CD8-positive, alpha-beta T cell (primary cell): ENCODE measurements at regions of chr1 and their contacts with region 1.

Region 1: DNA sequence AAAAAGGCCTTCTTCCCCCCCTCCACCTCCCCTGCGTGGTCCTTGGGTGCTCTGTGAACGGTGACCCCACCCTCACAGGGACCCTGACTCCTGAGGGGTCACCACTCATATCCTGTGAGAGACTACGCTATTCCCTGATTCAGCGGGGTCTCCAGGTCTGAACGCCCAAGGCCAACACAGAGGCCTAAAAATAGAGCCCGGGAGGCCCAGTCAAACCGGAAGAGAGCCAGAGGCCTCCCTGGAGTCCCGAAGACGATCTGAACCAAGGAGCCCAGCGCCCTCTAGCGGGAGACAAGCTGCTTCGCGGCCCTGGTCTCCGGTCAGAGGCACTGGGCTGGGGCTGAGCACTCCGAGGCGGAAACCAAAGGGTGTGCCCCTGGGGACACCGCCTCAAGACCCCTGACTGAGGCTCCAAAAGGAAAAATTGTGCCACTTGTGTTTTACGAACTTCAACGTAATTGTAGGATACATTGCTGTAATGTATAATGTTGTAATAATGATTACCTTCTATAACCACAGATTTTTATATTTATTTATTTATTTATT is 42.4 kb upstream of the PSEN2 start:
- DNase-seq: peak; percentile 86 to 98 (median 93)
- ATAC-seq: peak; percentile 99
- H3K4me3 ChIP-seq: peak overlapping the region; percentile 3 to 21
- H3K4me3 Mint-ChIP-seq: peak overlapping the region; percentile 58
- H3K27ac ChIP-seq: peak overlapping the region; percentile 46 to 73
- H3K27ac Mint-ChIP-seq: peak overlapping the region; percentile 69
- H3K4me1 ChIP-seq: peaks cover 10% of the 10 kb centered on the region
- H3K4me1 Mint-ChIP-seq: peaks cover 20% of the 10 kb centered on the region
- H3K27me3 ChIP-seq: no peaks in the 10 kb centered on the region
- H3K27me3 Mint-ChIP-seq: no peaks in the 10 kb centered on the region
- CTCF ChIP-seq: peak; percentile 94

Region 2: GRCh38 chr1:226547754-226548191 is 280.3 kb before region 1 on chr1:
- CTCF ChIA-PET with region 1: interaction called, 4 read pairs
- POLR2A ChIA-PET with region 1: no interaction called
- intact Hi-C with region 1: loop called in 1 of 2 experiments (anchors 5 kb)
- DNase-seq: peak; percentile 34 to 78 (median 56)
- ATAC-seq: peak; percentile 43
- H3K4me3 ChIP-seq: no peak overlapping the region
- H3K4me3 Mint-ChIP-seq: peak overlapping the region; percentile 58
- H3K27ac ChIP-seq: no peak overlapping the region
- H3K27ac Mint-ChIP-seq: no peak overlapping the region
- H3K4me1 ChIP-seq: peaks cover 20% of the 10 kb centered on the region
- H3K4me1 Mint-ChIP-seq: peaks cover 23% of the 10 kb centered on the region
- H3K27me3 ChIP-seq: peaks cover 6 to 18% of the 10 kb centered on the region in 2 experiments
- H3K27me3 Mint-ChIP-seq: peaks cover 25% of the 10 kb centered on the region
- CTCF ChIP-seq: peak; percentile 62

Region 3: DNA sequence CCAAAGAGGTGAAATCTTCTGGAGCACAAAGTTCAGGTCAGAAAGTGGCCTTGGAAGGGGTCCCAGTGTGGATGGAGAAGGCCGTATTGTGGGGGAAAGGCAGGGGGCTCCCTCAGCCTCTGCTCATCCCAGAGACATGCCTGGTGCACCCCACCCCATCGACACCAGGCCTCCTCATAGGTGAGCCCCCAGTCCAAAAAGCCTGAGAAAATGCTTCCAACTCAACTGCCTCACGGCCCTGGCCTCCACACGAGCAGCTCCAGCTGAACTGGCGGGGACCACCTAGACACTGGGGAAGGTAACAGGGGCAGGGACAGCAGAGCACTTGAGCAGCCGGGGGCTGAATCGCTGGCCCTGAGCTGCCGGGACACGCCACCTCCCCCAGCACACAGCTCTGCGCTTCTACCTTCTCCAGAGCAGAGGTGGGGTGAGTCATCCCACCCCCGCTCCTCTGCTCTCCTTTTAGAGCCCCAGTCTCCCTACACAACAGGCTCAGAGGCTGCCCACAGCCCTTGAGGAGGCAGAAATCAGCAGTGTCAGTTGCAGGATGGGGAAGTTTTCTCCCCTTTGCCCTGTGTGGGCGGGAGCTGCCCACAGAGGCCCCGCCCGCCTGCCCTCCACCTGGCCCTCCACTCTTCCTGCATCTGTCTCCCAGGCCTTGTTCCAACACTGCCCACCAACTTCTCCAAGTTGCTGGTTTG is 185.0 kb before region 1 on chr1:
- CTCF ChIA-PET with region 1: interaction called, 19 read pairs
- POLR2A ChIA-PET with region 1: interaction called, 3 read pairs
- intact Hi-C with region 1: no loop called
- DNase-seq: peak in 6 of 9 experiments; percentile 49 to 73 (median 66)
- ATAC-seq: peak; percentile 76
- H3K4me3 ChIP-seq: no peak overlapping the region
- H3K4me3 Mint-ChIP-seq: peak overlapping the region; percentile 54
- H3K27ac ChIP-seq: peak overlapping the region; percentile 27 to 34
- H3K27ac Mint-ChIP-seq: peak overlapping the region; percentile 89
- H3K4me1 ChIP-seq: peaks cover 57% of the 10 kb centered on the region
- H3K4me1 Mint-ChIP-seq: peaks cover 55% of the 10 kb centered on the region
- H3K27me3 ChIP-seq: no peaks in the 10 kb centered on the region
- H3K27me3 Mint-ChIP-seq: no peaks in the 10 kb centered on the region
- CTCF ChIP-seq: no peak

Region 4: GRCh38 chr1:226649780-226650179 is 178.3 kb before region 1 on chr1:
- CTCF ChIA-PET with region 1: interaction called, 9 read pairs
- POLR2A ChIA-PET with region 1: no interaction called
- intact Hi-C with region 1: loop called in 1 of 2 experiments (anchors 1 kb)
- DNase-seq: peak in 6 of 9 experiments; percentile 53 to 74 (median 64)
- ATAC-seq: no peak
- H3K4me3 ChIP-seq: no peak overlapping the region
- H3K4me3 Mint-ChIP-seq: no peak overlapping the region
- H3K27ac ChIP-seq: peak overlapping the region in 1 of 2 experiments; percentile 23
- H3K27ac Mint-ChIP-seq: no peak overlapping the region
- H3K4me1 ChIP-seq: peaks cover 52% of the 10 kb centered on the region
- H3K4me1 Mint-ChIP-seq: peaks cover 57% of the 10 kb centered on the region
- H3K27me3 ChIP-seq: no peaks in the 10 kb centered on the region
- H3K27me3 Mint-ChIP-seq: no peaks in the 10 kb centered on the region
- CTCF ChIP-seq: peak; percentile 59

Region 5: DNA sequence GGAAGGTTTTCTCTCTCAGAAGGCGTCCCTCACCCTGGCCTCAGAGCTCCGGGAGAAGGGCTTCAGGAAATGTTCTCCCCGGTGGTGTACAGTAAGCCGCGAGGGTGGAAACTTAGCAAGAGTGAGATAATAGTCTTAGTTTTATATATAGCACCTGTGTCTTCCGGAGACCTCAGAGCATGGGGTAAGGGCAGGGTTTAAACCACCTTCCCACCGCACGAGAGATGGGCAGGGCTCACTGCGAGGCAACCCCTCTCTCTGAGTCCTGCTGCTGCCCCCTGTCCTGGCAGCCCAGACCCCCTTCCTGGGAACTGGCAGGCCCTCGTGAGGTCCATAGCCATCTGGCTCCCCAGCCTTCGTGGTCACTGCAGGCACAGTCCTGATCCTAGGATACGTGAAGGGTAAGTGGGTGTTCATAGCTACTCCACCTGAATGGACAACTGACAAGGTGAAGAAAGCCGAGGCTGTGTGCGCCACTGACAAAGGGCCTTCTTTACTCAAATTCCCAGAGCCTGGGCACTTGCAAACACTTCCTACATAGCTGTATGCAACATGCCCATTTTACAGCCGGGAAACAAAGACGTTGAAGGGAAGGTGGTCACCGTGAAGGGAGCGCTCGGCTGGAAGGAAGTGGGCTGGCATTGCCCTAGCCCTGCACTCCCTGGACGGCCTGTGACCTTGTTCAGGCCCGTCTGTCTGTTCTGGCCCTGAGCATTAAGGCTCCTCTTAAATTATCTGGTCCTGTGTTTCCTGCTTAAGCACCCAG is 115.9 kb before region 1 on chr1:
- CTCF ChIA-PET with region 1: interaction called, 13 read pairs
- POLR2A ChIA-PET with region 1: no interaction called
- intact Hi-C with region 1: loop called in 1 of 2 experiments (anchors 1 kb)
- DNase-seq: peak in 8 of 9 experiments; percentile 40 to 83 (median 67)
- ATAC-seq: peak; percentile 55
- H3K4me3 ChIP-seq: peak overlapping the region; percentile 21 to 36
- H3K4me3 Mint-ChIP-seq: peak overlapping the region; percentile 65
- H3K27ac ChIP-seq: peak overlapping the region; percentile 35 to 76
- H3K27ac Mint-ChIP-seq: peak overlapping the region; percentile 93
- H3K4me1 ChIP-seq: peaks cover 96% of the 10 kb centered on the region
- H3K4me1 Mint-ChIP-seq: peaks cover 98% of the 10 kb centered on the region
- H3K27me3 ChIP-seq: no peaks in the 10 kb centered on the region
- H3K27me3 Mint-ChIP-seq: no peaks in the 10 kb centered on the region
- CTCF ChIP-seq: no peak